Posterior cingulate gyrus (tissue), 11 donors: ENCODE measurements at regions of chr17 and their contacts with region 1.

Region 1: DNA sequence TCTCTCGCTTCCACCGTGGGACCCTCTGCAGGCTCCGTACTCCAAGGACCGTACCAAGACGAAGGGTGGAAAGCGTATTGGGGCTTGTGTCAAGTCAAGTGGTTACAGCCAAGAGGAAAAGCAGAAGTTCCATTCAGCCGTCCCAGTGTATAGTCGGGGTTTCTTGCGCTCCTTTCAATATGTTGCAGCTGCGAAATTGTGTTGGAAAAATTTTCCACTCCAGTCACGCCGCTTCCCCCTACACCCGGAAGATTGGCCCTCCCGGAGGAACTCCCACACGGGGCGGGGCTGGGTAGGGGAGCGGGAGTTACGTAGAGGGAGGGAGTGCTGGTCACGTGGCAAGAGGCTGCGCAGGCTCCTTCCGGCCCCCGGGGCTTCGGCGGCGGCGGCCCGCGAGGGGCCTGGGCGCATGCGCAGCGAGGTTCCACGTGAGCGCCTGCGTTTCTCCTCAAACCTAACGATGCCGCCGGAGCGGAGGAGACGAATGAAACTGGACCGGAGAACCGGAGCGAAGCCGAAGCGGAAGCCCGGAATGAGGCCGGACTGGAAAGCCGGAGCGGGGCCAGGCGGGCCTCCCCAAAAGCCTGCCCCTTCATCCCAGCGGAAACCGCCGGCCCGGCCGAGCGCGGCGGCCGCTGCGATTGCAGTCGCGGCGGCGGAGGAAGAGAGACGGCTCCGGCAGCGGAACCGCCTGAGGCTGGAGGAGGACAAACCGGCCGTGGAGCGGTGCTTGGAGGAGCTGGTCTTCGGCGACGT is at the start of gene UTP18:
- DNase-seq: peak; percentile 93 to 99 (median 95)

Region 2: DNA sequence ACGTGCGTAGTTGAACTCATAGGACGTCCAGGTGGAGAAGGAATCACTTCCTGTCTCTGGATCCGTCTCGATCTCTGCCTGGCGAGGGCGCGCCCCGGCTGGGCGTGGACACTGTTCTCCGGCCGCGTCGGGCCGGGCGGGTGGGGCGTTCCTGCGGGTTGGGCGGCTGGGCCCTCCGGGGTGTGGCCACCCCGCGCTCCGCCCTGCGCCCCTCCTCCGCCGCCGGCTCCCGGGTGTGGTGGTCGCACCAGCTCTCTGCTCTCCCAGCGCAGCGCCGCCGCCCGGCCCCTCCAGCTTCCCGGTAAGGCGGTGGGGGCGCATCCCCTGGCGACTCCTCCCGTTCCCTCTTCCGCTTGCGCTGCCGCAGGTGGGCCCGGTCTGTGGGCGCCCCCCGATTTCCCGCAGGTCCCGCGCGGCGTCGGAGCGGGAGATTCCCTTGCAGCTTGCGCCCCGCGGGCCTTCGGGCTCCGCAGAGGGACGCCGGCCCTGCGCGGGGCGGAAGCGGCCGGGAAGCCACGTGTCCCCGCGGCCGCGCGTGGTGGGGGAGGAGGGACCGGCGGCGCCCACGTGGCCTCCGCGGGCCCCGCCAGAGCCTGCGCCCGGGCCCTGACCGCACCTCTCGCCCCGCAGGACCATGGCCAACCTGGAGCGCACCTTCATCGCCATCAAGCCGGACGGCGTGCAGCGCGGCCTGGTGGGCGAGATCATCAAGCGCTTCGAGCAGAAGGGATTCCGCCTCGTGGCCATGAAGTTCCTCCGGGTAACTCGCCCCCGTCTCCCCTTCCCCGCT is 93.9 kb before region 1 on chr17 and contains the start of gene NME2:
- intact Hi-C with region 1: loop called (anchors 2 kb)
- DNase-seq: peak; percentile 61 to 97 (median 78)